ENCODE measurements at regions of chr1 and their contacts with region 1.

Region 1: DNA sequence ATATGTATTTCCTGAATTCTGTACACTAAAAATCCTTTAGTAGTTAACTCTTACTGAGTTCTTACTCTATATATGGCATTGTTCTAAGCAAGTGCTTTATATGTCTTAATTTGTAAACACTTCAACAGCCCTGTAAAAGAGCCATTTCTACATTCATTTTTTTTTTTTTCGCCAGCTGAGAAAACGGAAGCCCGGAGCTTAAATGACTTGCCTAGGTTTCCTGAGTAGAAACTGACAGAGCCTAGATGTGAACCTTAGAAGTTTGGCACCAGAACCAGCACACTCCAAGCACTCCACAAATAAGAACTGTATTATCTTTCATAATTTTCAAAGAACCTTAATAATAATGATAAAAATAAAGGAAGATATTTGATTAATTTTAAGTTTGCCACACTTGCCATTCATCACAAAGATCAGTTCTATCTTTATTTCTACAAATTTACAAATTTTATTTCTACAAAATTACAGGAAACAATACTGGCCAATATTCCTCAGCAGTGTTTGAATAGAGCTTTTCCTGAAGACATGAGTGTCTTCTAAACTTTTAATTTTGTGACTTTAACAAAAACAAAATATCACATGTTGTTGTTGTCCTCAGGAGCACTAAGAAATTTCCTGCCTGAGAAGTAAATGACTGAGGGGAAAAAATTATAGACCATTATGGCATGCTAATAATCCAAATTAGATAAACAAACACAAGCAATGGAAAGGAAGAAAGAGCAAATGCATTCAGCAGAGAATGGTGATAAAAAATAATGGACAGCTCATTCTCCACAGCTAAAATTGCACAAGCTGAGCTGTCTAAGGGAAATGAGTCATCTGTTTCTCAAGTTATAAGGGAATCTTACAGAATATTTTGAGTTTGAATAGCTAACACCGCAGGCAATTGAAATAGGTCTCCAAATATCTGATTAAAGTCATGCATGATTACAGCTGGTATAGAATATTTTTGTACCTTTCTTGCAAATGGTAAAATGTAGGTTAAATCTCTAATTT is 71.2 kb downstream of the DPYD start:
- DNase-seq: no peak
- ATAC-seq: peak; percentile 66

Region 2: GRCh38 chr1:97758541-97759057 is 91.0 kb before region 1 on chr1:
- intact Hi-C with region 1: no loop called
- DNase-seq: no peak
- ATAC-seq: peak; percentile 29

Region 3: DNA sequence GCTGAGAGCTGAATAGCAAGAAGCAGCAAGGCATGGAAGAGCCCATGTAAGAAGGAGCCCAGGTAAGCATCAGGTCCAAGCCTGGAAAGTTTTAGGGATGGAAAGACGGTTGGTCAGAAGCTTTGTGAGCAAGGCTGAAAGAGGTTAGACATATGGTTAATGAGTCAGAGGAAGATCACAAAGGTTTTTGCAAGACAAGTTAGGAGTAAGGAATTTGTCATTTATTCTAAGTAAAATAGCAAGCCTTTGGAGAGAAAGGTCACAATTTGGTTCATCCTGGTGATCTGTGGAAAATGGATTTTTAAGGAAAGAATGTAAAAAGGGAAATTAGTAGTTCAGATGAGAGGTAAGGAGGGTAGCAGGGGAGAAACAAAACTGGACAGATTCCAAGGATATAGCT is 35.5 kb before region 1 on chr1:
- intact Hi-C with region 1: no loop called
- DNase-seq: no peak
- ATAC-seq: no peak

Region 4: DNA sequence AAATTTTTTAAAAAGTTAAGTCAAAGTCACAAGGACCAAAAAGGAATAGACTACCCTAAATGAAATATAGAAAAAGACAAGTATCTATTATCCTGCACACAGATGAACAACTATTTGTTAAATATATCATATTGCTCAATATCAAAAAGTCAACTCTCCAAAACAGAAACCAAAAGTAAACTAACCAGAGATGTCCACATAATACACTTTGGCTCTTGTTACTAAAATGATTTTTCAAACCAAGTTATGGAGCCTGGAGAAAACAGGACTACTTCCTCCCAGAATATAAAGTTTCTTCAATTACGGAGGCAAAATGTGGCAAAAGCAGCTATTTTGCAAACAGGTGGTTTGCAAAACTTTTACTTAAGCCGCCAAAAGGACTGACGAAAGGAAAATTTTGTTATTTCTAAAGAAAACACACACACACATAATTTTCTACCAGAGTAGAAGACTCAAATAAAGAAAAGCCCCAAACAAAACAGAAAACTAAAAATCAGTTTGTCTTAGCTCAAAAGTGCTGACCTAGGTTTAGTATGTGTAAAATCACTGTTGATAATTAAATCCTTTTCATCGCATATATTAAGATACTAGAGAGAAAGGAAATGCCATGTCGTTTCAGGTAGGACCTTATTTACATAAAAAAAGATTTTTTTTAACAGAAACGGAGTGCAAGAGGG is 70.1 kb after region 1 on chr1:
- intact Hi-C with region 1: loop called (anchors 10 kb)
- DNase-seq: no peak
- ATAC-seq: peak; percentile 21

Measured in Right ventricle myocardium superior (tissue), 1 donor.